H1 (cell line): ENCODE measurements at regions of chr10 and their contacts with region 1.

Region 1: DNA sequence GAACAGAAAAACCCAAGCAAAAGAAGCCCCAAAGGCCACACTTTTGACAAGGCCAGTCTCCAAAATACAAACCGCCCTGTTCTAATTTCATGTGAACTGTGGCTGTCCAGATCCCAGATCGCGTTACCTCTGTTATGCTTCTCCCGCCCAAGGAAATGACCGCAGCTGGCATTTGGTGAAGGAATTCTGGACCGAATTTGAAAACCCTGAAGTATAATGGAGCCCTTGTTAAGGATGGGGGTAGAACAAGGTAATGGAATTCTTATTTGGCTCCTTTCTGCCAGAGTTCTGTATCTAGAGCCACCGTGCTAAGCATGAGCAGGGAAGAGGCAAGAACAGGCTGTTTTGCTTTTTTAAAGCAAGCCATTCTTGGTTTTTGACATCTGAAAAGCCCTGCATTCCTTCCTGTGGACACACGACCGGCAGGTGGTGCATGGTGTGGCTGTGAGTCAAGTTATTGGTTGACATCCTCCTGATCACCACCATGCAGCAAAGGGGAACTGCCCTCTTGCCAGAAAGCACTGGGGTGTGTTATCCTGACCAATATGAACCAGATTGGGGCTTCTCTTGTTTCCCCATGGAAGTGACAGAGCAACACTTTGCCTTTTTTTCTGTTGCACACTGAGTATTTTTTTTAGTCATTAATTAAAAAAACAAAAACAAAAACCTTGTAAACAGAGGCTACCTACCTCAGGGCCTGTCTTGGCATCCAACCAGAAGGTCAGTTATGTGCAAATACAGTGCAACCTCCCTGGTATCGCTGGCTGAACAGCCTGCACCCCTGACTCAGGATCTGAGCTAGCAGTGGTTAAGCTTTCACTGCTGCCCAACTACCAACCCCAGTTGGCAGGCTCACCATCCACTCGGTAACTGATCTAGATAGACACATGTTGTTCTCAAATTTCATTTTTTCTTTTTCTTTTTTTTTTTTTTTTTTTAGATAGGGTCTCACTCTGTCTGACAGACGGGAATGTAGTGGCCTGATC is 14.2 kb downstream of the UCMA start:
- DNase-seq: peak; percentile 46 to 63
- H3K4me3 ChIP-seq: no peak overlapping the region
- H3K27ac ChIP-seq: no peak overlapping the region
- H3K4me1 ChIP-seq: peaks cover 0 to 5% (median 0%) of the 10 kb centered on the region in 4 experiments; a peak in 3 of 7 replicates
- H3K27me3 ChIP-seq: no peaks in the 10 kb centered on the region
- CTCF ChIP-seq: peak; percentile 58 to 66 (median 63)
- EP300 ChIP-seq: no peak
- POLR2A ChIP-seq: no peak
- RAD21 ChIP-seq: peak; percentile 53 to 62

Region 2: DNA sequence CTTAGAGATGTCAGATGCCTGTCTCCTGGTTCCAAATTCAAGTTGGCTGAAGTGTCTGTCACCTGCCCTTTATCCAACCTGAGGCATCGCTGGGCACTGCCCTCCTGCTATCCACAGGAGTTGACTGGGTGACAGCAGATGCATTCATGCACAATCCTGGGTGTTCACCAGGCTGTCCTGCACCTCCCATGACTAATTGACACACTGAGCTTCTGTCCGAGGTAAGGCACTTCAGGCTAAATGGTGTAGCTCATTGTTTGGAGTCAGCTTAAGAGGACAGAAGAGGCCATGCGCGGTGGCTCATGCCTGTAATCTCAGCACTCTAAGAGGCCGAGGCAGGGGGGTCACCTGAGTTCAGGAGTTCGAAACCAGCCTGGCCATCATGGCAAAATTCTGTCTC is 11.8 kb after region 1 on chr10:
- CTCF ChIA-PET with region 1: interaction called, 15 read pairs
- POLR2A ChIA-PET with region 1: interaction called, 5 read pairs
- DNase-seq: no peak
- H3K4me3 ChIP-seq: no peak overlapping the region
- H3K27ac ChIP-seq: no peak overlapping the region
- H3K4me1 ChIP-seq: peaks cover 4 to 20% (median 10%) of the 10 kb centered on the region in 4 experiments
- H3K27me3 ChIP-seq: no peaks in the 10 kb centered on the region
- CTCF ChIP-seq: no peak
- EP300 ChIP-seq: no peak
- POLR2A ChIP-seq: no peak
- RAD21 ChIP-seq: no peak

Region 3: DNA sequence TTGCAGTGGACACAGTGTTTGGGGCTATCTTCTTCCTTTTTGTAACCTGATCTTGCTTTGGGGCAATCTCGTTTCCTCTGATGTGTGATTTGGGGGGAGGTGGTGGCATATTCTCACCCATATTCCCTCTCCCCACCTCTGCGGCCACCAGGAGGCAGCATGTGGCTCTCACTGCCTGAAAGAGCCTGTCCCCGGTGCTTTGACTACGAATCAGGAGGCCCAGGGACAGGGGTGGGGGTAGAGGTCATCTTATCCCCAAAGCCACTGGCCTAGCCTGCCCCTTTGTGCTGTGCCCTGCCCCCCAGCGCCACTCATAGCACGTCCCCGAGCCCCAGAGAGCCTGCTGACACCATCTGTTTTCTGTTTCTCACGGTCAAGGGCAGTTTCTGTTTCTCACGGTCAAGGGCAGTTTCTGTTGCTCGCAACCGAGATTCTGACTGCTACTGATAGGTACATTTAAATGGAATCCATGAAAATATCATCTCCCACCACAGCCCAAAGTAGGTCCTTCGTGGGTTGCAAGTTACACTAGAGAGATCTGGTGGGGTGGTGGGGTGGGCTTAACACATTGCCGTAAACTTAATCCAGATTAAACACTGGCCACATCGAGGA is 51.7 kb after region 1 on chr10:
- CTCF ChIA-PET with region 1: interaction called, 13 read pairs
- POLR2A ChIA-PET with region 1: no interaction called
- DNase-seq: peak; percentile 38 to 91
- H3K4me3 ChIP-seq: no peak overlapping the region; a peak in 1 of 8 replicates
- H3K27ac ChIP-seq: peak overlapping the region; percentile 36; the same call in 1 of the 2 replicates
- H3K4me1 ChIP-seq: peaks cover 4 to 12% (median 7%) of the 10 kb centered on the region in 4 experiments
- H3K27me3 ChIP-seq: no peaks in the 10 kb centered on the region; a peak in 1 of 7 replicates
- CTCF ChIP-seq: peak; percentile 72 to 88 (median 84)
- EP300 ChIP-seq: no peak
- POLR2A ChIP-seq: no peak
- RAD21 ChIP-seq: peak; percentile 60 to 77